Heart left ventricle (tissue), 16 donors: ENCODE measurements at regions of chr20 and their contacts with region 1.

Region 1: DNA sequence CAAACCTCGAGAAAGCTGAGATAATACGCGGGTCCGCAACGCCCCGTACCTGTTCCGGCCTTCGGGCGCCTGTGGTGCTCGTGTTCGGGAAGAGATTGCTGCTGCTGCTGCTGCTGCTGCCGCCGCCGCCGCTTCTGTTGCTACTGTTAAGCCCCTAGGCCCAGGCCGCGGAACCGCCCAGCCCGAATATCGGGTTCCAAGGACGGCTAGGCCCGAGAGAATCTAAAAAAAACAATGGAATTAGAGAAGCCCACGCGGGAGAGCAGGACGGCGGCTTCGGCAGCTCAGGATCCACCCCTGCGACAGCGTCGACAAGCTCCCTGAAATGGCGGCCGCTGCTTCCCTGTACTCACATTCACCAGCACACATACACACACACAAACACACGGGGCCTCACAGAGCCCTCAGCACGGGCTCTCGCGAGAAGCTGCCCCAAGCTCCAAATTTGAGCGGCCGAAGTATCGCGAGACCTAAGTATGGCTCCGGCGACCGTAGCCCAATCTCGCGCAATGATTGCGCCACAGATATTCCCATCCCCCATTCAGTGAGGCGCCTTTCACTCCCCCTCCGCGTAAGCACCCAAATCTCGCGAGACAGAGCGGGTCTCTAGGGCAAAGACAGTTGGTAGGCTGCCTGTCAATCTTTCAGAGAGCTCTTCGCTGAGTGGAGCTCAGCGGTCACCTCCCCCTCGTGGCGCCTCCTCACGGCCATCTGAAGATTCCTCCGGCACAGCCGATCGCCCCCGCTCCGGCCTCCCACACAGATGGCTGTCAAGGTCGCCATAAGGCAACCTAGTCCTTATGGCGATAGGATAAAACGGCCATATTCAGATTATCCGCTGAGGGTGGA is at the start of gene RBM39:
- DNase-seq: peak; percentile 100
- ATAC-seq: peak; percentile 93 to 97 (median 96)
- H3K4me3 ChIP-seq: peak within 1 kb of the TSS; percentile 62 to 91 (median 78)
- H3K27ac ChIP-seq: peak within 1 kb of the TSS; percentile 96 to 100 (median 99)
- H3K4me1 ChIP-seq: peaks cover 7 to 56% (median 34%) of the 10 kb centered on the region in 12 donors
- H3K27me3 ChIP-seq: no peaks in the 10 kb centered on the region
- CTCF ChIP-seq: peak; percentile 19 to 74 (median 46)
- POLR2A ChIP-seq: peak; percentile 73 to 86
- total RNA-seq, gene RBM39: 72.6 to 147 (median 112) TPM

Region 2: DNA sequence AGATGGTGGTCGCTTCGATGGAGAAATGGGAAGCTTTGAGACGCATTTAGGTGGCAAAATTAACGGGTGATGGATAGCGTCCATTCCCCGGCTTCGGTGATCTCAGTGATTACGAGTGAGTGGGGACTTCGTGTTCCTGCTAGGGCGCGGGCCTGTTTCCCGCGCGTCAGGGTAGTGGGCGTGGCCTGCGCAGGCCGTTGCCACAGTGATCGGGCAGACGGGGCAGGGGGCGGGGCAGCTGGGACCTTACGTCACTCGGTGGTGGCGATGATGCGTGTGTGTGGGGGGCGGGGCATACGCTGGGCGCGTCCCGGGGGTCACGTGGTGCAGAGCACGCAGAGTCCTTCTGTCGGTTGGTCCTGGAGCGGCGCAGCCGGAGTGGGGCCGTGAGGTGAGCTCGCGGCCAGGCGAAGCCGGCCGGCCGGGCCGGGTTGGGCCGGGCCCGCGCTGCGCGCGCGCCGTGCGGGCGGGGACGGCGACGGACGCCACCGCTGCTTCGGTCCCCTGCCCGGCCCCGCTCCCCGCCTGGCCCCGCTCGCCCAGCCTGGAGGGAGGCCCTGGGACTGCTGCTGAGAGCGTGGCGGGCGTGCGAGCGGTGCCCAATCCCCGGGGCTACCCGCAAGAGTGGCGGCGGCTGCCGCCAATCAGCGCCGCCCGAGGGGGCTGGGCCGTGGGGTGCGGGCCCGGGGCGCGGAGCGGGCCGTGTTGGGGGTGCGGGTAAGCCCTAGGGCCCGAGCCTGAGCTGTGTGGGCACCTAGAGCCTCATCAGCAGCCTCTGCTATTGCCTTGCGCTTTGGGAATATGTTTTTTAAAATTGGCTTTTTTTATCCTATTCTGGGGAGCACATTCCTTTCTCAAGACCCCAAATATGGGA is 29.8 kb after region 1 on chr20 and contains the start of gene PHF20:
- intact Hi-C with region 1: loop called in 6 of 10 experiments (anchors 1 to 2 kb)
- DNase-seq: peak; percentile 99 to 100 (median 99)
- ATAC-seq: peak; percentile 87 to 90 (median 88)
- H3K4me3 ChIP-seq: peak within 1 kb of the TSS; percentile 61 to 92 (median 82)
- H3K27ac ChIP-seq: peak within 1 kb of the TSS; percentile 84 to 97 (median 92)
- H3K4me1 ChIP-seq: peaks cover 12 to 91% (median 50%) of the 10 kb centered on the region in 12 donors
- H3K27me3 ChIP-seq: no peaks in the 10 kb centered on the region
- CTCF ChIP-seq: no peak
- POLR2A ChIP-seq: peak; percentile 22 to 81
- total RNA-seq, gene PHF20: 26.4 to 47.0 (median 36.5) TPM

Region 3: DNA sequence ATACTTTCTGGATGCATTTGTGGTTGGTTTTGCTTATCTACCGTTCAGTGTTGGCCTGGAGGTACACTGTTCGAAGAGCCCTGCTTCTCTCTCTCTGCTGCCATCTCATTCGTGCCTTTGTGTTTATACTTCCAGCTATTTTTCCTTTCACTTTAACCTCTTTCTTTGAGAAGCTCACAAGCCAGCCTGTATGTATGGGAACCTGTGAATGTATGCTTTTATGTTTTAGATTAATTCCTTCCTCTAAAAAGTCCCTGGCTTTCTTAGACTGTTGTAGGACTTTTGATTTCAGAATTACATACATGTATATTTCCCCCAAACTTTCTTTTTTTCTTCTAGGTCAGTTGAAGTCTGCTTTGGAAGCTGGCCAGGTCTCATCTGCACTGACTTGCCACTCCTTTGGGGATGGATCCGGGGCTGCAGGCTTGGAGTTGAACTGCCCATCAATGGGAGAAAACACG is 129.2 kb after region 1 on chr20:
- intact Hi-C with region 1: no loop called
- DNase-seq: peak in 4 of 5 donors; percentile 26 to 56 (median 38)
- ATAC-seq: peak in 1 of 4 donors; percentile 23
- H3K4me3 ChIP-seq: peak overlapping the region in 3 of 12 donors; percentile 1 to 19 (median 7)
- H3K27ac ChIP-seq: peak overlapping the region in 5 of 12 donors; percentile 3 to 45 (median 9)
- H3K4me1 ChIP-seq: peaks cover 0 to 28% (median 9%) of the 10 kb centered on the region in 12 donors
- H3K27me3 ChIP-seq: no peaks in the 10 kb centered on the region
- CTCF ChIP-seq: no peak
- POLR2A ChIP-seq: no peak